Activated CD4-positive, alpha-beta T cell treated with anti-CD3 and anti-CD28 coated beads, Interleukin-2, amount 10 ng/mL, durations not matched to agents 24 days and 14 days (primary cell): ENCODE measurements at regions of chr1 and their contacts with region 1.

Region 1: DNA sequence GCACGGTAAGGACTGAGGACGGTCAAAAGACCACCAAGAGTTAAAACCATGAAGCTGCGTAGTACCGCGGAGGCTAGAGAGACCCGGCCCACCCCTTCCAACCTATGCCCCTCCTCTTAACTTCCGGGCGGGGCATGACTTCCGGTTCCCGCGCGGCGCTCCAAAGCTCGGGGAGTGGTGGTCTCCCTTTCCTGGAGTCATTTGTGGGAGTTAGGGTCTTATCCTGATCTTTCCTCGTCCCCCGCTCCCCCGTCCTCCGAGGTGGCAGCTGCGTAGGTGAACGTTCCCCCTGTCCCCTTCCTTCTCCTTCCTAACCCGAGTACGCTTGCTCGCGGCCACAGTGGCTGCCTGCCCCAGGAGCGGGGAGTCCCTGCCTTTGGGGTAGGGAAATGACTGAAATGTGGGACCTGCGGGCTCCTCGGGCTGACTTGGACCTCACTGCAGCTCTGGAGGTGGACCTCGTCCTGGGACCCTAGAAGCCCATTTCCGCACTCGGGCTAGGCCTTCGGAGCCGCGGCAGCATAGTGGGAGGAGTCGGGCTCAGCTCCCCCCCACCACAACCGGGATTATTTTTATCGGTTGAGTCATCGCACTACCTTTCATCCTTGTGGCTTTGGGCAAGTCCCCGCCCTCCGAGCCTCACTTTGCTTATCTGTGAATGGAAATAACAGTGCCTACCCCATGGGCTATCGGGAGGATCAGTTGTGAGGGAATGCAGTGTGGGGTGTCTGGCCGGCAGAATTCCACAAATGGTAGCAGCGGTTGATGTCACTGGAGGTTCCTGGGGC is 24.1 kb downstream of the CELA3A start:
- DNase-seq: peak; percentile 97
- H3K4me3 Mint-ChIP-seq: peak overlapping the region; percentile 90
- H3K27ac Mint-ChIP-seq: peak overlapping the region; percentile 100
- H3K4me1 Mint-ChIP-seq: peaks cover 48% of the 10 kb centered on the region
- H3K27me3 Mint-ChIP-seq: no peaks in the 10 kb centered on the region

Region 2: GRCh38 chr1:22039594-22040285 is 14.2 kb after region 1 on chr1:
- intact Hi-C with region 1: loop called (anchors 1 kb)
- DNase-seq: peak; percentile 98
- H3K4me3 Mint-ChIP-seq: peak overlapping the region; percentile 80
- H3K27ac Mint-ChIP-seq: peak overlapping the region; percentile 98
- H3K4me1 Mint-ChIP-seq: peaks cover 42% of the 10 kb centered on the region
- H3K27me3 Mint-ChIP-seq: no peaks in the 10 kb centered on the region